OCI-LY7 (cell line): ENCODE measurements at regions of chr14 and their contacts with region 1.

Region 1: DNA sequence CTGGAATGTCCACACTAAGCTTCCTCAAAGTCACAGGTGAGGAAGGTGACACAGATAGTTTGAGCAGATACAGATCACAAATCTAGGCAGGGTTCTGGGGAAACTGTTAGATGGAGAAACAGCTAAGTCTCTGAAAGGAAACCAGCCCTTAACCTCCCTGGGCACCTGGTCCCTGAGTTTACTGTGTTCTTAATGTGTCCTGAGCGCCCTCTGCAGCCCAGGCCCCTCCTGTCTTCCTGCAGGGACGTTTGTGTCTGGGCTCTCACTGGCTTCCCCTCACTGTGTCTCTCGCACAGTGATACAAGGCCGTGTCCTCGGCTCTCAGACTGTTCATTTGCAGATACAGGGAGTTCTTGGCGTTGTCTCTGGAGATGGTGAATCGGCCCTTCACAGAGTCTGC is 684.3 kb downstream of the TMEM121 start:
- DNase-seq: peak; percentile 85
- H3K4me3 ChIP-seq: no peak overlapping the region
- H3K27ac ChIP-seq: no peak overlapping the region
- H3K4me1 ChIP-seq: peaks cover 23% of the 10 kb centered on the region
- CTCF ChIP-seq: peak; percentile 75

Region 2: GRCh38 chr14:105682940-105683570 is 527.6 kb before region 1 on chr14:
- CTCF ChIA-PET with region 1: no interaction called
- POLR2A ChIA-PET with region 1: no interaction called
- intact Hi-C with region 1: loop called (anchors 5 kb)
- DNase-seq: peak; percentile 41
- H3K4me3 ChIP-seq: no peak overlapping the region
- H3K27ac ChIP-seq: peak overlapping the region; percentile 92
- H3K4me1 ChIP-seq: peaks cover 75% of the 10 kb centered on the region
- CTCF ChIP-seq: no peak

Region 3: GRCh38 chr14:106109337-106109736 is 101.3 kb before region 1 on chr14:
- CTCF ChIA-PET with region 1: no interaction called
- POLR2A ChIA-PET with region 1: no interaction called
- intact Hi-C with region 1: no loop called
- DNase-seq: no peak
- H3K4me3 ChIP-seq: no peak overlapping the region
- H3K27ac ChIP-seq: no peak overlapping the region
- H3K4me1 ChIP-seq: no peaks in the 10 kb centered on the region
- CTCF ChIP-seq: no peak